Endothelial cell of umbilical vein (primary cell): ENCODE measurements at regions of chr17 and their contacts with region 1.

Region 1: DNA sequence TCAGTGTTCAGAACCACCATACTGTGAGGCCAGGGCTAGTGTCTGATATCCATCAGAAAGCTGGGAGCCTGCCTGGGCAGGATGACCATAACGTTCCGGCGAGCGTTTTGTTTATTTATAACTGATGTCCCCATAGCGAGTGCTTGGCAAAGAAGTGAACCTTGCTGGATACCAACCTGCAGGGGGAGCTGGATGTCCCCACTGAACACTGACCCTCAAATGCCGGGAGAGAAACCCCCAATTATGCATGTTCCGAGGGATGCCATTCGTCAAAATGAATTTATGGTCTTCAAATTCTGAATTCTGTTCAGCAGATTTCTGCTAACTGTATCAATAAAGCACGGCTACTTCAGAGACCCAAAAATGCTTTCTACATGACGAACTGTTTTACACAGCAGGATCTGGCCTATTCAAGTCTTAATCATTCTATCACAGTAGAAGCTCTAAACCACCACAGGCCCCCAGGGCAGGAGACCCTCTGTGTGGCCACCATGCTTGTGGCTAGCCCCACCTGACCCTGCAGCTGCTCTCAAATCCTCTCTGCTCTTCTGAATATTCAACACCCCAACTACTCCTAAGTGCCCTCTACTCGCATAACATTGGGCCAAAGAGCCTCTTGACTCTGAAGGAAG is 15.2 kb downstream of the MED24 start:
- DNase-seq: peak; percentile 84
- H3K4me3 ChIP-seq: no peak overlapping the region
- H3K27ac ChIP-seq: peak overlapping the region; percentile 27
- H3K4me1 ChIP-seq: peaks cover 5% of the 10 kb centered on the region
- H3K27me3 ChIP-seq: no peaks in the 10 kb centered on the region
- CTCF ChIP-seq: peak; percentile 74 to 85
- POLR2A ChIP-seq: peak; percentile 28

Region 2: GRCh38 chr17:39999067-39999466 is 39.9 kb before region 1 on chr17:
- CTCF ChIA-PET with region 1: no interaction called
- POLR2A ChIA-PET with region 1: no interaction called
- dilution Hi-C with region 1: no loop called
- intact Hi-C with region 1: no loop called
- DNase-seq: no peak
- H3K4me3 ChIP-seq: no peak overlapping the region
- H3K27ac ChIP-seq: no peak overlapping the region
- H3K4me1 ChIP-seq: no peaks in the 10 kb centered on the region
- H3K27me3 ChIP-seq: no peaks in the 10 kb centered on the region
- CTCF ChIP-seq: no peak
- POLR2A ChIP-seq: no peak

Region 3: GRCh38 chr17:40015005-40015997 is 23.7 kb before region 1 on chr17 and contains the start of gene CSF3:
- CTCF ChIA-PET with region 1: interaction called, 14 read pairs
- POLR2A ChIA-PET with region 1: no interaction called
- dilution Hi-C with region 1: no loop called
- intact Hi-C with region 1: no loop called
- DNase-seq: peak; percentile 31
- H3K4me3 ChIP-seq: peak within 1 kb of the TSS in 1 of 3 experiments; percentile 5
- H3K27ac ChIP-seq: peak within 1 kb of the TSS; percentile 88
- H3K4me1 ChIP-seq: peaks cover 56% of the 10 kb centered on the region
- H3K27me3 ChIP-seq: no peaks in the 10 kb centered on the region
- CTCF ChIP-seq: no peak
- POLR2A ChIP-seq: no peak
- total RNA-seq, gene CSF3: 2.4 and 2.9 TPM in 2 replicates

Region 4: GRCh38 chr17:40026816-40027613 is 12.0 kb before region 1 on chr17:
- CTCF ChIA-PET with region 1: interaction called, 13 read pairs
- POLR2A ChIA-PET with region 1: no interaction called
- dilution Hi-C with region 1: no loop called
- intact Hi-C with region 1: no loop called
- DNase-seq: peak; percentile 74
- H3K4me3 ChIP-seq: no peak overlapping the region
- H3K27ac ChIP-seq: peak overlapping the region; percentile 99
- H3K4me1 ChIP-seq: peaks cover 48% of the 10 kb centered on the region
- H3K27me3 ChIP-seq: no peaks in the 10 kb centered on the region
- CTCF ChIP-seq: peak; percentile 81 to 93
- POLR2A ChIP-seq: no peak

Region 5: DNA sequence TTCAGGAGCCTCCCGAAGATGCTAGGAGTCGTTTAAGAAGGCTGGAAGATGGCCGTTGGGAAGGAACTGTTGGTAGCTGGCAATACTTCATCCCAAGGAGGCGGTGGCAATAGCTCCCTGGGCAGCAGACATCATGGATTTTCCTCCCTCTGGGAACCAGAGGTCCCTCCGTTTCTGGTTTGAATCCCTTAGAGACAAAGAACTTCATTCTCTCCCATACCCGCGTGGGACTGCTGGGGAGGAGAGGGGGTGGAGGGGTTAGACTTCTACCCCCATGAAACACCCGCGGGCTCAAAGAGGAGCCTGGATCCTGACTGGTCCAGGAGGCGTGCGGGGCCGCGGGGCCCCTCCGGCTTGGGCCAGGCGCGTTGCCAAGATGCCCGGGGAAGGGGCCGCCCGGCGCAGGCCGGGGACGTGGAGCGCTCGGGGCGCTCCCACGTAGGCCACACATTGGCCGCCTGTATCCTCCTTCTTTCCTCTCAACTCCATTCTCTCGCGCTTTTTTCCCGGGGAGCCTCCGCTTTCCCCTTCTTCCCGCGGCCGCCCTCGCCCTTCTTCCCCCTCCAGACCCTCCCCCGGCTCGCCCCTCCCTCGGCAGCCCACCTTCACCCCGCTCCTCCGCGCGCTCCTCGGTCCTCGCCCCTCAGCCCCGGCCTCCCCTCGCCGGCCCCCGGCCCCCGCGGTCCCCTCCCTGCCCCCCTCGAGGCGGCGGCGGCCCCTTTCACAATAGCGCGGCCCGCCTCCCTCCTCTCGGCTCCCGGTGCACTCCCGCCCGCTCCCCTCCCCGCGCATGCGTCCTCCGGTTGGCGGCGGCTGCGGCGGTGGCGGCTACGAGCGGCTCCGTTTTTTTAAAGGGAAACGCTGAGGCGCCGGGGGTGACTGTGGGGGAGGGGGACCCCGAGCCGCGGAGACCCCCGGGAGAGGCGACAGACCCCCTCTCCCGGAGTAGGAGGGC is 82.5 kb after region 1 on chr17 and contains the start of gene MSL1:
- CTCF ChIA-PET with region 1: interaction called, 10 read pairs
- POLR2A ChIA-PET with region 1: no interaction called
- dilution Hi-C with region 1: no loop called
- intact Hi-C with region 1: no loop called
- DNase-seq: peak; percentile 77
- H3K4me3 ChIP-seq: peak within 1 kb of the TSS; percentile 95 to 100 (median 98)
- H3K27ac ChIP-seq: peak within 1 kb of the TSS; percentile 71
- H3K4me1 ChIP-seq: peaks cover 22% of the 10 kb centered on the region
- H3K27me3 ChIP-seq: no peaks in the 10 kb centered on the region
- CTCF ChIP-seq: no peak
- POLR2A ChIP-seq: peak; percentile 84
- total RNA-seq, gene MSL1: 90.8 and 95.0 TPM in 2 replicates